Endothelial cell of umbilical vein (primary cell): ENCODE measurements at regions of chr1 and their contacts with region 1.

Region 1: GRCh38 chr1:46527474-46528296 is 23.8 kb downstream of the KNCN start:
- DNase-seq: peak; percentile 67
- H3K4me3 ChIP-seq: no peak overlapping the region
- H3K27ac ChIP-seq: no peak overlapping the region
- H3K4me1 ChIP-seq: no peaks in the 10 kb centered on the region
- H3K27me3 ChIP-seq: peaks cover 52 to 57% of the 10 kb centered on the region in 2 experiments
- CTCF ChIP-seq: peak; percentile 90 to 95
- POLR2A ChIP-seq: no peak

Region 2: DNA sequence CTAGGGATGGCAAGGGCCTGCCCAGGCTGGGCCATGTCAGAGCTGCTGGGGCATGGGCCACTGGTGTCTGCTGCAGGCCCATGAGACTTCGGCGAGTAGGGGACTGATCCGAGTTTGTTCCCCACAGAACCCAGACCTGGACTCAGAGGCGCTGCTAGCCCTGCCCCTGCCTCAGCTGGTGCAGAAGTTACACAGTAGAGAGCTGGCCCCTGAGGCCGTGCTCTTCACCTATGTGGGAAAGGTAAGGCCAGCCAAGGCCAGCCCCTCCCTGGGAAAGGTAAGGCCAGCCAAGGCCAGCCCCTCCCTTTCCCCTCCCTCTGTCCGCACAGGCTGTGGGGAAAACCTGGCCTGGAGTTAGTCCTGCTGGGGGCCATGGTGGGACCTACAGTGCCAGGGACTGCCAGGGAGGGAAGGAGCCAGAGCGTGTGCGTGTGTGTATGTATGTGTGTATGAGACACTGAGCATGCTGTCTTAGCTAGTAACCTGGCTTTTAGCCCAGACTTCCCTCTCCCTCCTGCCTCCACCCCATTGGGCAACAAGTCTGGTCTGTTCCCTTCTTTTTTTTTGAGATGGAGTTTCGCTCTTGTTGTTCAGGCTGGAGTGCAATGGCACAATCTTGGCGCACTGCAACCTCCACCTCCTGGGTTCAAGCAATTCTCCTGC is 125.6 kb before region 1 on chr1:
- CTCF ChIA-PET with region 1: interaction called, 53 read pairs
- POLR2A ChIA-PET with region 1: no interaction called
- dilution Hi-C with region 1: no loop called
- intact Hi-C with region 1: loop called (anchors 1 kb)
- DNase-seq: peak; percentile 33
- H3K4me3 ChIP-seq: no peak overlapping the region
- H3K27ac ChIP-seq: no peak overlapping the region
- H3K4me1 ChIP-seq: no peaks in the 10 kb centered on the region
- H3K27me3 ChIP-seq: peaks cover 0 to 2% of the 10 kb centered on the region in 2 experiments
- CTCF ChIP-seq: no peak
- POLR2A ChIP-seq: no peak

Region 3: GRCh38 chr1:46448109-46448911 is 79.4 kb before region 1 on chr1:
- CTCF ChIA-PET with region 1: interaction called, 165 read pairs
- POLR2A ChIA-PET with region 1: no interaction called
- dilution Hi-C with region 1: no loop called
- intact Hi-C with region 1: loop called (anchors 1 kb)
- DNase-seq: no peak
- H3K4me3 ChIP-seq: peak overlapping the region in 1 of 3 experiments; percentile 31
- H3K27ac ChIP-seq: no peak overlapping the region
- H3K4me1 ChIP-seq: no peaks in the 10 kb centered on the region
- H3K27me3 ChIP-seq: peaks cover 55 to 64% of the 10 kb centered on the region in 2 experiments
- CTCF ChIP-seq: no peak
- POLR2A ChIP-seq: no peak

Region 4: GRCh38 chr1:46489638-46490405 is 37.9 kb before region 1 on chr1 and contains the start of gene DMBX1:
- CTCF ChIA-PET with region 1: interaction called, 10 read pairs
- POLR2A ChIA-PET with region 1: no interaction called
- dilution Hi-C with region 1: no loop called
- intact Hi-C with region 1: no loop called
- DNase-seq: no peak
- H3K4me3 ChIP-seq: no peak within 1 kb of the TSS
- H3K27ac ChIP-seq: no peak within 1 kb of the TSS
- H3K4me1 ChIP-seq: no peaks in the 10 kb centered on the region
- H3K27me3 ChIP-seq: peaks cover 88 to 93% of the 10 kb centered on the region in 2 experiments
- CTCF ChIP-seq: no peak
- POLR2A ChIP-seq: no peak
- total RNA-seq, gene DMBX1: not detected in 2 replicates

Region 5: DNA sequence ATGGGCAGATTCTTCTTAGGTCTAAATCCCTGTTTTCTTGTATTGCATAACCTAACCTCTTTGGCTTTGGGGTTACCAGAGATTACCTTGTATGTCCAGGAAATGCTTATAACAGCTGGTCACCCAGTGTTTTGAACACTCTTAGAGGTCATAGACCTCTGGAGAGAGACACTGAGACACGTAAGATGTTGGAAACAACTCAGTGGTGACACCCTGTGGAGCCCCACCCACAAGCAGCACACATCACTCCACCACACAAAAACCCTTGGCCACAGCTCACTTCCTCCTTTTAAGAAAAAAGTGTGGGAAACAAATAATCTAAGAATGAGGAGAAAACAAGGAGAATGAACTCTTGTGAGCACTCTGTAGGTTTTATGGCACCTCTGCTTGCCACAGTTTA is 244.9 kb after region 1 on chr1:
- CTCF ChIA-PET with region 1: no interaction called
- POLR2A ChIA-PET with region 1: no interaction called
- dilution Hi-C with region 1: no loop called
- intact Hi-C with region 1: no loop called
- DNase-seq: no peak
- H3K4me3 ChIP-seq: no peak overlapping the region
- H3K27ac ChIP-seq: no peak overlapping the region
- H3K4me1 ChIP-seq: no peaks in the 10 kb centered on the region
- H3K27me3 ChIP-seq: no peaks in the 10 kb centered on the region
- CTCF ChIP-seq: no peak
- POLR2A ChIP-seq: no peak

Region 6: DNA sequence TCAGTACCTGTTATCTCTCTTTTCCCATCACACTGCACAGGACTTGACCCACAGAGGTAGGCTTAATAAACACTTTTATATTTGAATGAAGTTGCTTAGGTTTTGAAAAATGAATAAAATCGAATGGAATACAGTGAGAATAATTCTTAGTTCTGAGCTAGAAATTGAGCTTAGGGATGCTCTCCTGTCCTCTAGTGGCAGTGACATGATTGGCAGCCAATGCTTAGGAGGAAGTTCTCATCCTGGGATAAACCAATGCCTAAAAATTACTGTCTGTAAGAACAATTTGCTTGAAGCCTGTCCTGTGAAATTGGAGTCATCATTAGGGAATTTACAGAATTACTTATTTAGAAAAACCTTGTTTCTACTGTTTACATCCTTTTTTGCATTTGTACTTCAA is 474.5 kb after region 1 on chr1:
- CTCF ChIA-PET with region 1: no interaction called
- POLR2A ChIA-PET with region 1: no interaction called
- dilution Hi-C with region 1: no loop called
- intact Hi-C with region 1: loop called (anchors 5 kb)
- DNase-seq: no peak
- H3K4me3 ChIP-seq: no peak overlapping the region
- H3K27ac ChIP-seq: no peak overlapping the region
- H3K4me1 ChIP-seq: no peaks in the 10 kb centered on the region
- H3K27me3 ChIP-seq: peaks cover 0 to 2% of the 10 kb centered on the region in 2 experiments
- CTCF ChIP-seq: peak in 1 of 2 donors; percentile 14
- POLR2A ChIP-seq: no peak